HepG2 (cell line): ENCODE measurements at regions of chr3 and their contacts with region 1.

Region 1: GRCh38 chr3:128426128-128426921 is 40.4 kb downstream of the DNAJB8 start:
- DNase-seq: peak; percentile 35
- ATAC-seq: peak; percentile 84
- H3K4me3 ChIP-seq: peak overlapping the region in 2 of 3 experiments; percentile 40 to 65; a peak in 3 of 6 replicates
- H3K27ac ChIP-seq: no peak overlapping the region
- H3K4me1 ChIP-seq: peaks cover 21% of the 10 kb centered on the region
- H3K27me3 ChIP-seq: peaks cover 9 to 35% of the 10 kb centered on the region in 2 experiments
- CTCF ChIP-seq: peak; percentile 78
- EP300 ChIP-seq: no peak
- POLR2A ChIP-seq: peak in 1 of 2 experiments; percentile 40; a peak in 1 of 4 replicates
- RAD21 ChIP-seq: peak; percentile 97

Region 2: DNA sequence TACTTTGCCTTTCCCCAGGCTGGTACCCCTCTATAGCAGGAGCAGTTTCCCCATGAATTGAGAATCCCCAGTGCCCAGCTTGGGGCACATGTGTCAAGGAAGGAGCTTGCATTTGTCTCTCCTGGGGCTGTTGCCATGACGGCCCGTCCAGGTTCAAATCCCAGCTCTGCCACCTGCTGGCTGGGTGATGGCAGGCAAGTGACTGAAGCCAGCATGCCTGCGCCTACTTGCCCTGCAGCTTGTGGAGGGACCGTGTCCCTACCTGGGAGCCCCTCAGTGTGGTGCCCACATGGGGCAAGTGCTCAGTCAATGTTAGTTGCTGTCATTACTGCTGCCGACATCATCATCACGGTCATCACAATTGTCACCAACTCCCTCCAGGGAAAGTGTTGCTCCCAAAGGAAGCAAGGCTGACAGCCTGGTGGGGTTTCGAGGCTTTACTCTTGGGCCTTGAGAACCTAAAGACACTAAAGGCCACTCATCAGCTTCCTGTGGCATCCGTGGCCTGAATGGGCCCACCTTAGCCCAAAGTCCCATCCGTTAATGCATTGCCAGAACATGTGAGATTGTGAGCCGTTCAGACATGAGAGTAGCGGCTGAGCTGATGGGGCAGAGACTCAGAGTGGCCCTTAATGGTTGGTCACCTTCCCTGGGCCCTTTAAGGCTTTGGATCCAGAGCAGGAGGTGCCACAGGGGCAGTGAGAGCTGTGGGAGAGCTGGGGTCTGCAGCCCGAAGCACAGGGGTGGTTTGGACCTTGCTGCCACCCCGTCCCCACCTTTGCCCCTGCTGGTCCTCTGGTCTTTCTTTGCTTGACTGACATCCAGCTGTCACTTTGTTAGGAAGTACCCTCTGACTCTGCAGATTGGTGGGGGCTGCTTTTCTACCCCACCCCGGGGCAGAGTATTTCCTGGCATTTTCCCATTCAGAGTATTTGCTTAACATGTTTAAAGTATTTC is 104.0 kb before region 1 on chr3:
- CTCF ChIA-PET with region 1: no interaction called
- POLR2A ChIA-PET with region 1: no interaction called
- in situ Hi-C with region 1: no loop called
- intact Hi-C with region 1: loop called (anchors 5 kb)
- DNase-seq: no peak
- ATAC-seq: peak; percentile 51
- H3K4me3 ChIP-seq: no peak overlapping the region
- H3K27ac ChIP-seq: no peak overlapping the region
- H3K4me1 ChIP-seq: peaks cover 37% of the 10 kb centered on the region
- H3K27me3 ChIP-seq: no peaks in the 10 kb centered on the region
- CTCF ChIP-seq: peak; percentile 62
- EP300 ChIP-seq: no peak
- POLR2A ChIP-seq: no peak
- RAD21 ChIP-seq: peak; percentile 33; the same call in 1 of the 2 replicates

Region 3: DNA sequence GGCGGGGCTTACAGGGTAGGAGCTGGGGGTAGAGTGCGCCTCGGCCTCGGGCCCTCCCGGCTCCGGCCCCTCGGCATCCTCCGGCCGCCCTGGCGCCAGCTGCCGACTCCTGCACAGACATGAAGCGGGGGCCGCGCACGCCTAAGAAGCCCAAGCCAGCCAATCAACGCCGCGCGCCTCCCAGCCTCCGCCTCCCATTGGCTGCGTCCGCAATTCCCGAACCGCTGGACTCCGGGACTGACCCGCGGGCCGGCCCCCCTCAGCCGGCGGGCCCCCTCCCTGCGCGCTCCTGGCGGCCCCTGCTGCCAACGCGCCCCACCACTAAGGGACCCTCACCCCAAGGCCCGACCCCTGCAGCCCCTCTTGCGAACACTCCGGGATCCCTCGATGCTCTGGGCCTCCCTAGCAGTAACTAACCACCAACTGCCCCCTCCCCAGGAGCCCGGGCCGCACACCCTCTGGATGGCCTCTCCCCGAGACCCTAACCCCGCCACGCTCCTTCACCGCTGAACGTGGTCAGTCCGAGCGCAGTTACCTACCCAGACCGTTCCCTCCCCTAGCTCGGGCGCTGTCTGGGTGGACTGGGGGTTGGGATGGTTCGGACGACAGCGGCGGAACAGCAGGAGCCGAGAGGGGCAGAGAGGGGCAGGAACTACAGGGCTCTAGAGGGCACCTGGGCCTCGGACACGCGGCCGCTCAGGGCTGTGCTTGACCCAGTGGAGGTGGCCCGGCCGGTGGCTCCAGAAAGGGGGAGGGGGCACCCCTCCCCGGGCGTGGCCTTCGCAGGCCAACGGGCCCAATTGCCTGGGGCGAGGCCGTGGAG is 61.7 kb after region 1 on chr3:
- CTCF ChIA-PET with region 1: interaction called, 3 read pairs
- POLR2A ChIA-PET with region 1: interaction called, 3 read pairs
- in situ Hi-C with region 1: loop called (anchors 5 kb)
- intact Hi-C with region 1: loop called (anchors 2 kb)
- DNase-seq: peak; percentile 89
- ATAC-seq: peak; percentile 81
- H3K4me3 ChIP-seq: peak overlapping the region; percentile 87 to 91 (median 87)
- H3K27ac ChIP-seq: peak overlapping the region; percentile 80
- H3K4me1 ChIP-seq: peaks cover 32% of the 10 kb centered on the region
- H3K27me3 ChIP-seq: no peaks in the 10 kb centered on the region
- CTCF ChIP-seq: 0 out of 2 replicates have a peak, but pooled peaks have one; percentile 5
- EP300 ChIP-seq: 0 out of 4 replicates have a peak, but pooled peaks of 1 of the 2 experiments have one; percentile 19
- POLR2A ChIP-seq: peak in 1 of 2 experiments; percentile 80; a peak in 2 of 4 replicates
- RAD21 ChIP-seq: no peak; the same call in 1 of the 2 replicates

Region 4: DNA sequence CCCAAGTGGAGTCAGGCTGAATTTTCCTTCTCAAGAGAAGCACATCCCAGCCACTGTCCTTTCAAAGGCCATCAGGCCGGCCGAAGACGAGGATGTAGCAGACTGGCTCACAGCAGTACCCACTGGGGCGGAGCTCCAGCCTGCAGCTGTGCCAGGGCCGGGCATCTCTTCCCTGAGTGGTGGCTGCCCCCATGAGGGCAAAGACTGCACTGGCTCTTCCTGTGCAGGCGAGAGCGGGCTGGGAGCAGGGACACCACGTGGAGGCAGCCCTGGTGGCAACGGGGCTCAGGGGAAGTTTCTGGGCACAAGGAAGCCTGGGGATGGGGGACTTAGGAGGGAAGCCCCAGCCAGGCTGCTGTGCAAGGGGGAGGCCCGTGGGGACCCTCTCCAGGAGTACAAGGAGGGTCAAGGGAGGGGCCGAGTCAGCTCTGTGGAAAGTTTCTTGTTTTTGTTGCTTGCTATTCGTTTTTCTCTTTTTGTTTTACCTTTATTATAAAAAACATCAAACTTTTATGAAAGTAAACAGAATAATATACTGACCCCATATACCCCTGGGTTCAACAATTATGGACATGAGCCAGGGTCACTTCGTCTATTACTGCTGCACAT is 158.2 kb after region 1 on chr3:
- CTCF ChIA-PET with region 1: interaction called, 3 read pairs
- POLR2A ChIA-PET with region 1: no interaction called
- in situ Hi-C with region 1: no loop called
- intact Hi-C with region 1: loop called (anchors 10 kb)
- DNase-seq: peak; percentile 59
- ATAC-seq: peak; percentile 97
- H3K4me3 ChIP-seq: no peak overlapping the region
- H3K27ac ChIP-seq: no peak overlapping the region
- H3K4me1 ChIP-seq: no peaks in the 10 kb centered on the region
- H3K27me3 ChIP-seq: peaks cover 3 to 38% of the 10 kb centered on the region in 2 experiments; a peak in 4 of 5 replicates
- CTCF ChIP-seq: peak; percentile 94
- EP300 ChIP-seq: no peak
- POLR2A ChIP-seq: no peak
- RAD21 ChIP-seq: peak; percentile 84